ENCODE measurements at regions of chr12 and their contacts with region 1.

Region 1: GRCh38 chr12:40622246-40622838 is 69.9 kb upstream of the CNTN1 start:
- DNase-seq: peak; percentile 76

Region 2: GRCh38 chr12:40634517-40635131 is 12.3 kb after region 1 on chr12:
- intact Hi-C with region 1: no loop called
- DNase-seq: no peak

Region 3: DNA sequence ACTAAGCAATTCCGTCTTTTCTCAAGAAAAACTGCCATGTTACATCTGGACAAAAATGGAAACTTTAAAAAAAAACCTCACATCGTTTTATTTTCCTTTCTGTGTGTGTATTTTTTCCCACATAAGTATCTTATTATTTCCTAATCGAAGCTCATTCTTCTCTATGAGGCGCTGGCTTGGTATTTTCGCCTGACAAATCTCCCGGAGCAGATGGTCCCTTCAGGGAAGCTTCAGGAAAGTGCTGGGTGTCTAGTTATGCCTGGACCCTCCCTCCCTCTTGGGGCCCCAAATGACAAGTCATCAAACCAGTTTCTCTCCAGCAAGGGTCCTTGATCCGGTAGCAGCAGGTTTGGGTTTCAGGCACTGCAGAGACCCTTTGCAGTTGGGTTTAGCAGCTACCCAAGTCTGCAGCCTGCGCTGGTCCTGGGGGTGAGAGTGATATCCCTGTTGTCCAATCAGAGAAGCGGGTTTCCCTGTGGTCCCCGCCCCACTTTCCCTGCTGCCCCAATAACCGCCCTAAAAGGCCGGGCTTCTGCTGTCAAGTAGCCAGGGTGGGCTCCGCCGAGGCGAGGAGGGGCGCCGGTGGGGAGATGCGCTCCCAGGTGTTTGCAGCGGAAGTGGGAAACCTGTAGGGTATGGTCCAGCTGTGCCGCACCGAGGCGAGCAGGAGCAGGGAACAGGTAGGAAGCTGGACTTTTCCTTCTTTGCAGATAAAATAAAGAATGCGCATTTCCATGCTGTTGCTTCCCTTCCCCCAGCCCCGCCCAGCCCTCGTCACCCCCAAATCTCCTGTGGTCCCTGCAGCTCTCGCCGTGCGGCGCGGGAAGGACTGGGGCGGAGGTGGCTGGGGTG is 69.8 kb after region 1 on chr12 and contains the start of gene CNTN1:
- intact Hi-C with region 1: no loop called
- DNase-seq: peak; percentile 85
- total RNA-seq, gene CNTN1: 20.4 to 37.3 TPM

Region 4: GRCh38 chr12:40921563-40922163 is 299.3 kb after region 1 on chr12:
- intact Hi-C with region 1: loop called (anchors 5 kb)
- DNase-seq: no peak